ENCODE measurements at regions of chr16 and their contacts with region 1.

Region 1: GRCh38 chr16:81885976-81886586 is 107.0 kb downstream of the PLCG2 start:
- H3K4me3 ChIP-seq: no peak overlapping the region
- H3K27ac ChIP-seq: no peak overlapping the region
- H3K4me1 ChIP-seq: no peaks in the 10 kb centered on the region
- CTCF ChIP-seq: peak; percentile 18; the same call in 1 of the 2 replicates

Region 2: DNA sequence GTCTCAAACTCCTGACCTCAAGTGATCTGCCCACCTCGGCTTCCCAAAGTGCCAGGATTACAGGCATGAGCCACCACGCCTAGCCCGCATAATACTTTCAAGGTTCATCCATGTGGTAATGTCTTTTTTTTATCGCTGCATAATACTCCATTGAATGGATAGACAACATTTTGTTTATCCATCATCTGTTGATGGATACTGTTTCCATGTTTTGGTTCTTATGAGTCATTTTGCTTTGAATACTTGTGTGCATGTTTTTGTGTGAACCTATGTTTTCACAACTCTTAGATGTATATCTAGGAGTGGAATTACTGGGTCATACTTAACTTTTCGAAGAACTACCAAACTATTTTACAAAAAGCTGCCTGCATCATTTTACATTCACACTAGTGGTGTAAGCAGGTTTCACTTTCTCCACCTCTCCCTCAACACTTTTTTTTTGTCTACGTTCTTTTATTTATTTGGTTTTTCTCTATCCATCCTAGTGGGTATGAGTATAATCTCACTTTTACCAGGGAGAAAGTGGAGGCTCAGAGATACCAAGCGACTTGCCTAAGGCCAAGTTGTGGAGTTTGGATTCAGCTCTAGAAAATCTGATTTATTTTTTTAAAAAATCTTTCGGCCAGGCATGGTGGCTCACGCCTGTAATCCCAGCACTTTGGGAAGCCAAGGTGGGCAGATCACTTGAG is 290.3 kb before region 1 on chr16:
- CTCF ChIA-PET with region 1: no interaction called
- POLR2A ChIA-PET with region 1: no interaction called
- H3K4me3 ChIP-seq: no peak overlapping the region
- H3K27ac ChIP-seq: no peak overlapping the region
- H3K4me1 ChIP-seq: peaks cover 7% of the 10 kb centered on the region; the same call in 1 of the 2 replicates
- CTCF ChIP-seq: no peak

Region 3: DNA sequence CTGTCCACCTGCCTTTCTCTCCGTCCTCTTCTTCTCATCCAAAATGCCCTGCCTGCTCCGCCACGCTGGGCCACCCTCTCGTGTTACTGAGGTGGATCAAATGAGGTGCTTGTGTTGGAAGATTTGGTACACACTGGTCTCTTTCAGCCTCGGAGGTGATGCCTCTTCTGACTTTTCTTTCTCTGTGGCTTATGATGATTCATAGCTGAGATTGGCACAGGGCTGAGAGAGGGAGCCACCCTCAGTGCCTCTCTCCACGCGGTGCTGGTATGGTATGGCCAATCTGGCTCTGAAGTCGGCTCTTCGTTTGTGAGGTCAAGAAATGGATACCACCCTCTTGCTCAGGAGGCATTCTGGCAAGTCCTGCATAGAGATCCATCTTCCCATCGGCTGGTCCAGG is 24.6 kb before region 1 on chr16:
- CTCF ChIA-PET with region 1: interaction called, 13 read pairs
- POLR2A ChIA-PET with region 1: no interaction called
- H3K4me3 ChIP-seq: no peak overlapping the region
- H3K27ac ChIP-seq: no peak overlapping the region
- H3K4me1 ChIP-seq: no peaks in the 10 kb centered on the region
- CTCF ChIP-seq: no peak

Region 4: GRCh38 chr16:81873843-81874752 is 12.0 kb before region 1 on chr16:
- CTCF ChIA-PET with region 1: interaction called, 19 read pairs
- POLR2A ChIA-PET with region 1: no interaction called
- H3K4me3 ChIP-seq: no peak overlapping the region
- H3K27ac ChIP-seq: no peak overlapping the region
- H3K4me1 ChIP-seq: no peaks in the 10 kb centered on the region
- CTCF ChIP-seq: peak; percentile 44; the same call in 1 of the 2 replicates

Region 5: DNA sequence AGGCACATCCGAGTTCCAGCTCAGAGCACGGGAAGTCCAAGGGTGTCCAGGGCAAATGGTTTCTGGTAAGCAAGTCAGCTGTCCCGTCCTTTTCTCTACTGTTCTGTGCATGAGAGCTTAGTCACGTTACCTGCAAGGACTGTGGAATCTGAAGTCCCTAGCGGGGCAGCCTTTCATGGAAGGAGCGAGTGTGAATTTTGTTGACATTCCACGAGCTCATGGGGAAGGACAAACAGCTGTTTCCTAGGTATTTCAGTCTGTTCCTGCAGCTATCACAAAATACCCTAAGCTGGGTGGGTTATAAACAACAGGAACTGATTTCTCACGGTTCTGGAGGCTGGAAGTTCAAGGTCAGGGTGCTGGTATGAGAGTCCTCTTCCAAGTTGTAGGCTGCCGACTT is 15.9 kb after region 1 on chr16:
- CTCF ChIA-PET with region 1: interaction called, 13 read pairs
- POLR2A ChIA-PET with region 1: no interaction called
- H3K4me3 ChIP-seq: no peak overlapping the region
- H3K27ac ChIP-seq: no peak overlapping the region
- H3K4me1 ChIP-seq: 0 out of 2 replicates have a peak, but pooled peaks cover 3% of the 10 kb centered on the region
- CTCF ChIP-seq: no peak

Region 6: DNA sequence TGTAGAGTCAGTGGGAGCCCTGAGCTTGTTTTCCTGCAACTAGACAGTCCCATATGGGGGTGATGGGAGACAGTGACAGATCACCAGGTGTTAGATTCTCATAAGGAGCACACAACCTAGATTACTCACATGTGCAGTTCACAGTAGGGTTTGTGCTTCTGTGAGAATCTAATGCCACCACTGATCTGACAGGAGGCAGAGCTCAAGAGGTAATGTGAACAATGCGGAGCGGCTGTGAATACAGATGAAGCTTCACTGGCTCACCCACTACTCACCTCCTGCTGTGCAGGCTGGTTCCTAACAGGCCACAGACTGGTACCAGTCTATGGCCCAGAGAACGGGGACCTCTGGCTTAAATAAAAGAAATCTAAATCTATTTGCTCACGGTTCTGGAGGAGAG is 138.8 kb after region 1 on chr16:
- CTCF ChIA-PET with region 1: no interaction called
- POLR2A ChIA-PET with region 1: no interaction called
- H3K4me3 ChIP-seq: no peak overlapping the region
- H3K27ac ChIP-seq: no peak overlapping the region
- H3K4me1 ChIP-seq: no peaks in the 10 kb centered on the region; the same call in 1 of the 2 replicates
- CTCF ChIP-seq: no peak

Region 7: GRCh38 chr16:82229796-82230619 is 343.9 kb after region 1 on chr16:
- CTCF ChIA-PET with region 1: interaction called, 32 read pairs
- POLR2A ChIA-PET with region 1: no interaction called
- H3K4me3 ChIP-seq: no peak overlapping the region
- H3K27ac ChIP-seq: no peak overlapping the region
- H3K4me1 ChIP-seq: no peaks in the 10 kb centered on the region
- CTCF ChIP-seq: peak; percentile 67